K562 (cell line): ENCODE measurements at regions of chr12 and their contacts with region 1.

Region 1: DNA sequence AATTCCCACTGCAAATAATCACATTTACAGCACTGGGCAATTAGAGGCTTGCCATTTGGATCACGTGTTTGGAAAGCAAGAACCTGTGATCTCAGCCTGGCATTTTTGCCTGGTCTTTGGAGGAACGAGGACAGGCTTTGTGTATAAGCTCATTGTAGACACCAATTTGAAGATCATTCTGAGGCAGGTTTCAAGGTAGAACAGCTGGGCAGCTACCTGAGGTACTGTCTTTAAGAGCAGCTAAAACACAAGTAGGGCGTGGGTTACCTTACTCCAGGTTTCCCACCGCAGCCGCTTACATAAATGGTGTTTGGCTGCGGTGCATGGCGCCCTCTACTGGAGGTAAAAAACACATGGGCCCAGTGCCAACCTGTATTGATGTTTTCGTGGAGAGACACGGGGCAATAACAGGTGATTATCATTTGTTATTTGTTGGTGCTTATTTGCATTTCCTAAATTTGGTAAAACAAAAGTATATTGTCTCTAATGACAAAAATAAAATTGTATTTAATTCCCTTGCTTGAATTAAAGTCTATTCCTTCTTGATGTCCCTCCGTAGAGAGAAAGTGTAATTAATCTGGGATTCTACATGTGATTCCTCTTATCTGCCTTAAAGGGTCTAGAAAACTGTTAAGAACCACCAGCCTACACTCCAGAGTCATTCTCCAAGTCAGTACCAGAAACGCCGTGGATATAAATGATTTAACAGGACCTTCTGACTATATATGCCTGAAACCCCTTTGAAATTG is 69.7 kb downstream of the SVOP start:
- DNase-seq: peak; percentile 48 to 79 (median 68)
- ATAC-seq: peak; percentile 93
- H3K4me3 ChIP-seq: no peak overlapping the region
- H3K27ac ChIP-seq: no peak overlapping the region
- H3K4me1 ChIP-seq: no peaks in the 10 kb centered on the region; a peak in 1 of 5 replicates
- H3K27me3 ChIP-seq: peaks cover 4 to 21% of the 10 kb centered on the region in 2 experiments; a peak in 4 of 5 replicates
- CTCF ChIP-seq: peak; percentile 80 to 88 (median 86)
- EP300 ChIP-seq: no peak
- POLR2A ChIP-seq: no peak
- RAD21 ChIP-seq: peak; percentile 76 to 86

Region 2: GRCh38 chr12:108803428-108804105 is 147.6 kb before region 1 on chr12:
- CTCF ChIA-PET with region 1: interaction called, 6 read pairs
- POLR2A ChIA-PET with region 1: no interaction called
- in situ Hi-C with region 1: no loop called
- intact Hi-C with region 1: loop called (anchors 5 kb)
- DNase-seq: peak; percentile 82 to 87 (median 83)
- ATAC-seq: peak; percentile 96
- H3K4me3 ChIP-seq: no peak overlapping the region
- H3K27ac ChIP-seq: no peak overlapping the region
- H3K4me1 ChIP-seq: peaks cover 2 to 3% of the 10 kb centered on the region in 2 experiments; a peak in 3 of 5 replicates
- H3K27me3 ChIP-seq: no peaks in the 10 kb centered on the region
- CTCF ChIP-seq: peak; percentile 86 to 96 (median 86)
- EP300 ChIP-seq: no peak
- POLR2A ChIP-seq: no peak
- RAD21 ChIP-seq: peak; percentile 97 to 98

Region 3: GRCh38 chr12:108826101-108826806 is 124.9 kb before region 1 on chr12:
- CTCF ChIA-PET with region 1: no interaction called
- POLR2A ChIA-PET with region 1: no interaction called
- in situ Hi-C with region 1: no loop called
- intact Hi-C with region 1: loop called (anchors 2 kb)
- DNase-seq: peak in 3 of 4 experiments; percentile 47 to 60 (median 47)
- ATAC-seq: peak; percentile 35; the same call in 2 of the 3 replicates
- H3K4me3 ChIP-seq: no peak overlapping the region
- H3K27ac ChIP-seq: no peak overlapping the region
- H3K4me1 ChIP-seq: peaks cover 14 to 36% of the 10 kb centered on the region in 2 experiments; a peak in 4 of 5 replicates
- H3K27me3 ChIP-seq: peaks cover 2 to 6% of the 10 kb centered on the region in 2 experiments; a peak in 3 of 5 replicates
- CTCF ChIP-seq: no peak
- EP300 ChIP-seq: no peak
- POLR2A ChIP-seq: no peak
- RAD21 ChIP-seq: no peak

Region 4: DNA sequence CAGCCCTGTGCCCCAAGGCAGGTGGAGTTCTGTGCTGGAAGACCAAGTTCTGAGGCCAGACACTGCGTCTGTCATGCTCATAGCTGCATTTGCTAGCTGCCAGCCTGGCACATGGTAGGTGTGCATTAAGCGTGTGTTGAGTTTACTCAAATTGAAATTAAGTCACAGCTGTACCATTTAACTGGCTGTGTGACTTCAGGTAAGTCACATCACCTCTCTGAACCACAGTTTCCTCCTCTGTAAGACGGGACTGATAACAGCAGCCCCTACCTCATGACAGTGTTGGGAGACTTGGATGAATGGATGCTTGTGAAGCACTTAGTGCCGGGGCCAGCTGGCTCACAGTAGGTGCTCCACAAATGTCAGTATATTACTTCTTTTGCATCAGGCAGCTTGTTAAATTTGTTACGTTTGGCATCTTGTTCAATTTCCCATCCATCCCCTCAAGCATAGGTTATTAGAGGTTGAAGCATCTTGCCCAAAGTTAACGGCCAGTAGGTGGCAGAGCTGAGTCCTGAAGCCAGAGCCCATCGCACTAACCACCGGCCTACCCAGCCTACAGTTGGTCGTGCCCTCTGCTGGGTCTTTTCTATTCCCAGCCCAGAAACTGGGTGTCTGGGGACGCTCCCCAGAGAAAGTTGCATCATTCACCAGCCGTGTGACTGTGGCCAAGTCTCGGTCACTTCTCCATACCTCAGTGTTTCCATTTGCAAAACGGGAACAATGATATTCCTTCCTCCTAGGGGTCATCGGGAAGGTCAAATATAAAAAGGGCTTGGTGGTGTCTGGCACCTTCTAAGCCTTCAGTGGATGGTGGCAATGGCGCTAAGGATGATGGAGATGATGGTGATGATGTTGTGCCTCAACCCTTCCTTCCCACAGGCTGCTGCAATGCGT is 66.8 kb before region 1 on chr12:
- CTCF ChIA-PET with region 1: no interaction called
- POLR2A ChIA-PET with region 1: no interaction called
- in situ Hi-C with region 1: no loop called
- intact Hi-C with region 1: loop called (anchors 2 kb)
- DNase-seq: peak; percentile 55 to 72 (median 68)
- ATAC-seq: peak; percentile 93
- H3K4me3 ChIP-seq: no peak overlapping the region
- H3K27ac ChIP-seq: no peak overlapping the region
- H3K4me1 ChIP-seq: no peaks in the 10 kb centered on the region; a peak in 1 of 5 replicates
- H3K27me3 ChIP-seq: peaks cover 21 to 52% of the 10 kb centered on the region in 2 experiments
- CTCF ChIP-seq: peak; percentile 77 to 82 (median 80)
- EP300 ChIP-seq: no peak
- POLR2A ChIP-seq: no peak
- RAD21 ChIP-seq: peak; percentile 28 to 64; a peak in 3 of 4 replicates

Region 5: GRCh38 chr12:109309381-109310246 is 358.4 kb after region 1 on chr12:
- CTCF ChIA-PET with region 1: no interaction called
- POLR2A ChIA-PET with region 1: no interaction called
- in situ Hi-C with region 1: no loop called
- intact Hi-C with region 1: no loop called
- DNase-seq: peak in 2 of 4 experiments; percentile 60 to 66
- ATAC-seq: peak; percentile 70
- H3K4me3 ChIP-seq: no peak overlapping the region; the same call in 1 of the 2 replicates
- H3K27ac ChIP-seq: no peak overlapping the region
- H3K4me1 ChIP-seq: peaks cover 5 to 13% of the 10 kb centered on the region in 2 experiments; a peak in 3 of 5 replicates
- H3K27me3 ChIP-seq: peaks cover 46 to 57% of the 10 kb centered on the region in 2 experiments
- CTCF ChIP-seq: no peak
- EP300 ChIP-seq: no peak
- POLR2A ChIP-seq: no peak
- RAD21 ChIP-seq: no peak